Activated CD4-positive, alpha-beta T cell treated with anti-CD3 and anti-CD28 coated beads for 36 hours (primary cell): ENCODE measurements at regions of chr20 and their contacts with region 1.

Region 1: GRCh38 chr20:4014031-4014474 is 1.3 kb downstream of the RNF24 start:
- DNase-seq: peak; percentile 44
- ATAC-seq: peak; percentile 28
- H3K4me3 Mint-ChIP-seq: peak overlapping the region; percentile 92
- H3K27ac Mint-ChIP-seq: peak overlapping the region; percentile 83
- H3K4me1 Mint-ChIP-seq: peaks cover 37% of the 10 kb centered on the region
- H3K27me3 Mint-ChIP-seq: peaks cover 2% of the 10 kb centered on the region

Region 2: GRCh38 chr20:3820048-3820900 is 193.8 kb before region 1 on chr20 and contains the start of gene AP5S1:
- CTCF ChIA-PET with region 1: no interaction called
- POLR2A ChIA-PET with region 1: no interaction called
- intact Hi-C with region 1: loop called in 1 of 2 experiments (anchors 1 kb)
- DNase-seq: peak; percentile 96
- ATAC-seq: peak; percentile 86
- H3K4me3 Mint-ChIP-seq: peak within 1 kb of the TSS; percentile 89
- H3K27ac Mint-ChIP-seq: peak within 1 kb of the TSS; percentile 96
- H3K4me1 Mint-ChIP-seq: peaks cover 33% of the 10 kb centered on the region
- H3K27me3 Mint-ChIP-seq: no peaks in the 10 kb centered on the region
- total RNA-seq, gene AP5S1: 9.1 to 11.3 TPM

Region 3: GRCh38 chr20:3888622-3889488 is 125.2 kb before region 1 on chr20 and contains the start of gene PANK2:
- CTCF ChIA-PET with region 1: interaction called, 3 read pairs
- POLR2A ChIA-PET with region 1: no interaction called
- intact Hi-C with region 1: loop called in 1 of 2 experiments (anchors 1 kb)
- DNase-seq: peak; percentile 98
- ATAC-seq: peak; percentile 99
- H3K4me3 Mint-ChIP-seq: peak within 1 kb of the TSS; percentile 95
- H3K27ac Mint-ChIP-seq: peak within 1 kb of the TSS; percentile 93
- H3K4me1 Mint-ChIP-seq: peaks cover 46% of the 10 kb centered on the region
- H3K27me3 Mint-ChIP-seq: no peaks in the 10 kb centered on the region
- total RNA-seq, gene PANK2: 37.2 to 50.2 TPM

Region 4: DNA sequence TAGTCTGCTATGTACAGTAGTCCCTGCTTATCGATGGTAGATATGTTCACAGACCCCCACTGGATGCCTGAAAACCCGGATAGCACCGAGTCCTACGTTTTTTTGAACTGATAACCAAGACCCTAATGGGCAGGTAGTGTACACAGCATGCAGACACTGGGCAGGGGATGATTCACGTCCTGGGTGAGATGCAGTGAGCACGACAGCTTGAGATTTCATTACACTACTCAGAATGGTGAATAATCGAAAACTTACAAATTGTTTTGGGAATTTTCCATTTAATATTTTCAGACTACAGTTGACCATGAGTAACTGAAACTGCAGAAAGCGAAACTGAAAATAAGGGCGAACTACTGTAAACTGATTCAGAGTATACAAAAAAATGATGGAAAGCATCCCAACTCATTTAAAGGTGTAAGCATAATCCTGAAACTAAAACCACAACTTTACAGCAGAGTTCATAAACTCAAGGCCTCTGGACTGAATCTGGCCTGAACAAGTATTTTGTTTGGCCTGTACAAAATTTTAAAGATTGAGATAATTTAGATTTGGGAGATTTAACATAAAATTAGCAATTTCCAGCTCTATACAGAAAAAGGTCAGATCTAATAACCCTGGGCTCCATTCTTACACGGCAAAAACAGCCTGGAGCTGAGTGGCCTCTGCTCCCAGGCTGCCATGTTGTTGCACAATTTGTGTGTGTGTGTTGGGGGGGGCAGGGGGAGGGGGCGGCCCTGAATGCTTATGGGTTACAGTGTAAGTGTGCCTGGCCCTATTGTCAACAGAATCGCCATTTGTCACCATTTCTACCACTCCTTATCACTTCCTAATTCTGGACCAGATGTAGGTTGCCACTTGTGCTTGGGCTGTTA is 33.6 kb before region 1 on chr20:
- CTCF ChIA-PET with region 1: interaction called, 3 read pairs
- POLR2A ChIA-PET with region 1: interaction called, 3 read pairs
- intact Hi-C with region 1: loop called in 1 of 2 experiments (anchors 1 kb)
- DNase-seq: peak; percentile 65
- ATAC-seq: peak; percentile 93
- H3K4me3 Mint-ChIP-seq: peak overlapping the region; percentile 24
- H3K27ac Mint-ChIP-seq: peak overlapping the region; percentile 83
- H3K4me1 Mint-ChIP-seq: peaks cover 21% of the 10 kb centered on the region
- H3K27me3 Mint-ChIP-seq: no peaks in the 10 kb centered on the region

Region 5: DNA sequence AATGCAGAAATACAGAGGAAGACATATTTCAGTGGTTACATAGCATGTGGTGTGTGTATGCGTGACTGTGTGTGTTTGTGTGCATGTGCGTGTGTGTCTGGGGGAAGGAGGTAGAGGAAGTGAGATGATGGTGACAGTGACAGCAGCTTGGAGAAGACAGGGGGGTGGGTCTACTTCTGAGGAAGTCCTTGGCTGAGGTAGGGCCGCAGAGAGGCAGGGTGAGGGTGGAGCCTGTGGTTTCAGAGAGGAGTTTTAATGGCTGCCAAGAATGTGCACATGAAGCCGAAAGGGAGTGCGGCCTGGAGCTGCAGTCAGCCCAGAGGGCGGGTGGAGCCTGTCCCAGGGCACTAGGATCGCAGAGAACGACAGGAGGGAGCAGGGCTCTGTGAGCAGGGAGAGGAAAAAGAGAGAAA is 24.0 kb after region 1 on chr20:
- CTCF ChIA-PET with region 1: interaction called, 6 read pairs
- POLR2A ChIA-PET with region 1: no interaction called
- intact Hi-C with region 1: loop called (anchors 1 to 2 kb)
- DNase-seq: peak; percentile 88
- ATAC-seq: peak; percentile 100
- H3K4me3 Mint-ChIP-seq: peak overlapping the region; percentile 69
- H3K27ac Mint-ChIP-seq: peak overlapping the region; percentile 99
- H3K4me1 Mint-ChIP-seq: peaks cover 17% of the 10 kb centered on the region
- H3K27me3 Mint-ChIP-seq: no peaks in the 10 kb centered on the region

Region 6: GRCh38 chr20:4053071-4053919 is 39.2 kb after region 1 on chr20:
- CTCF ChIA-PET with region 1: no interaction called
- POLR2A ChIA-PET with region 1: no interaction called
- intact Hi-C with region 1: no loop called
- DNase-seq: no peak
- ATAC-seq: no peak
- H3K4me3 Mint-ChIP-seq: no peak overlapping the region
- H3K27ac Mint-ChIP-seq: no peak overlapping the region
- H3K4me1 Mint-ChIP-seq: no peaks in the 10 kb centered on the region
- H3K27me3 Mint-ChIP-seq: no peaks in the 10 kb centered on the region

Region 7: GRCh38 chr20:4091490-4092479 is 77.7 kb after region 1 on chr20:
- CTCF ChIA-PET with region 1: interaction called, 10 read pairs
- POLR2A ChIA-PET with region 1: no interaction called
- intact Hi-C with region 1: no loop called
- DNase-seq: peak; percentile 67
- ATAC-seq: peak; percentile 70
- H3K4me3 Mint-ChIP-seq: no peak overlapping the region
- H3K27ac Mint-ChIP-seq: no peak overlapping the region
- H3K4me1 Mint-ChIP-seq: peaks cover 3% of the 10 kb centered on the region
- H3K27me3 Mint-ChIP-seq: peaks cover 8% of the 10 kb centered on the region